ENCODE measurements at regions of chr2 and their contacts with region 1.

Region 1: GRCh38 chr2:240851078-240851991 is 17.3 kb upstream of the AGXT start:
- DNase-seq: peak; percentile 67
- ATAC-seq: peak; percentile 99
- H3K4me3 ChIP-seq: no peak overlapping the region
- H3K27ac ChIP-seq: no peak overlapping the region
- H3K4me1 ChIP-seq: no peaks in the 10 kb centered on the region
- H3K27me3 ChIP-seq: peaks cover 4% of the 10 kb centered on the region; the same call in 1 of the 2 replicates
- CTCF ChIP-seq: peak; percentile 93
- POLR2A ChIP-seq: no peak
- RAD21 ChIP-seq: peak; percentile 96

Region 2: DNA sequence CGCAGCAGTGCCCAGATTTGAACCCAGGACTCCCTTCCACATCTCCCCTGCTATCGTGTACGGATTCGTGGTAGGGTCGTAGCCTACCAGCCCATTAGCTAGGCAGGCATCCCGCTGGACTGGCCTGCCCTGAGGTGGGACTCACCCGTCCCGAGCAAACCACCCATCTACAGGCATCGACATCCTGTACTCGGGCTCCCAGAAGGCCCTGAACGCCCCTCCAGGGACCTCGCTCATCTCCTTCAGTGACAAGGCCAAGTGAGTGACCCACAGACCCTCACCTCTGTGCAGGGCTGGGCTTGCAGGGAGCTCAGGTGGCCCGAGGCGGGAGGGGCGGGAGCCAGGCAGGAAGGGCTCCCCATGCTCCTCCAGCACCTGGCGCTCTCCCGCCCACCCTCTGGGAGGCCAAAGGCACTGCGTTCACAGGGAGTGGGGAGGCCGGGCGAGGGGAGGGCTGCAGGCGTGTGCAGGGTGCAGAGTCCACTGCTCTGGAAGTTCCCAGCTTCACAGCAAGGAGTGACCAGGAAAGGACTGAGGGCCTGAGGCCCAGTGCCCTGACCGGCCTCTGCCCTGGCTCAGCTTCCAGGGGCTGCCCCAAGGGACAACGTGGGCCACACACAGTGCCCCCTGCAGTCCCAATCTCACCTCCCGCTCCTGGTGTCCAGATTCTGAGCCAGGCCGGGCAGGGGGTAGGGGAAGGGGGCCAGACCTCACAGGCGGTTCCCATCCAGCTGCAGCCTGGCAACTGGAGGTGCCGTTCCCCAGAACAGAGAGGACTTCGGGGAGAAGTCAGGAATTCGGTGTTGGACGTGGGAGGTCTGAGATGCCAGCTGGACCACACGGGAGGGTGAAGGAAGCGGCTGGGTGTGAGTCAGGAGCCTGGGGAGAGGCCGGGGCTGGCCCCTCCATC is 22.7 kb after region 1 on chr2:
- CTCF ChIA-PET with region 1: no interaction called
- POLR2A ChIA-PET with region 1: no interaction called
- dilution Hi-C with region 1: no loop called
- in situ Hi-C with region 1: no loop called
- intact Hi-C with region 1: no loop called
- DNase-seq: peak; percentile 8
- ATAC-seq: peak; percentile 38
- H3K4me3 ChIP-seq: no peak overlapping the region
- H3K27ac ChIP-seq: no peak overlapping the region
- H3K4me1 ChIP-seq: no peaks in the 10 kb centered on the region
- H3K27me3 ChIP-seq: peaks cover 28% of the 10 kb centered on the region; the same call in 1 of the 2 replicates
- CTCF ChIP-seq: no peak
- POLR2A ChIP-seq: no peak
- RAD21 ChIP-seq: no peak

Region 3: GRCh38 chr2:240991373-240992263 is 140.3 kb after region 1 on chr2:
- CTCF ChIA-PET with region 1: no interaction called
- POLR2A ChIA-PET with region 1: no interaction called
- dilution Hi-C with region 1: no loop called
- in situ Hi-C with region 1: no loop called
- intact Hi-C with region 1: loop called (anchors 2 kb)
- DNase-seq: peak; percentile 97
- ATAC-seq: peak; percentile 79
- H3K4me3 ChIP-seq: no peak overlapping the region
- H3K27ac ChIP-seq: peak overlapping the region; percentile 35
- H3K4me1 ChIP-seq: peaks cover 32% of the 10 kb centered on the region
- H3K27me3 ChIP-seq: no peaks in the 10 kb centered on the region
- CTCF ChIP-seq: no peak
- POLR2A ChIP-seq: no peak
- RAD21 ChIP-seq: no peak

Region 4: DNA sequence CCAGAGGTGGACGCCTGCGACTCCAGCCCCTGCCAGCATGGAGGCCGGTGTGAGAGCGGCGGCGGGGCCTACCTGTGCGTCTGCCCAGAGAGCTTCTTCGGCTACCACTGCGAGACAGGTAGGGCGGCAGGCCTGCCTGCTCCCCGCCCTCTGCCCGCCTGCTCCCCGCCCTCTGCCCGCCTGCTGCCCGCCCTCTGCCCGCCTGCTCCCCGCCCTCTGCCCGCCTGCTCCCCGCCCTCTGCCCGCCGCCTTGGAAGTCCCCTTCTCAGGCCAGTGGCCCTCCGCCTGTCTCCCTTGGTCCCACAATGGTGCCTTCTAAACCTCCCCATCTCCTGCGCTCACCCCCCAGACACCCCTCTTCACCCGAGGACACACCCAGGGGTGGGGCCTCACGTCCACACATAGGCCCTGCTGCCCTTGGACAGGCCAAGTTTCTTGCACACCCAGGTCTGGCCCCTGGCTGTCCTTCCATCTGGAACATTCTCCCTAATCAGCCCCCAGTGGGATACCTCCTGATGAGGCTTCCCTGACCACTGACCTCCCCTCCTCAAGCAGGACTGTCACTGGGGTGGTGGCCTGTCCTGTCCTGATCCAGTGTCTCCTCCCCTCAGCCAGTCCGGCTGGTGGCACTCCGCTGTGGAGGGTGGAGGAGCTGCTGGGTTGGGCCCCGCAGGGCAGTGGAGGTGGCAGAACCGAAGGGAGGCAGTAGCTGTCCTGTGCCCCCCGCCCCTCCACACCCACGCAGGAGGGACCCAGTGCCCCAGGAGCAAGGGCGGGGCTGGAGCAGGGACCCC is 212.9 kb after region 1 on chr2:
- CTCF ChIA-PET with region 1: no interaction called
- POLR2A ChIA-PET with region 1: no interaction called
- dilution Hi-C with region 1: no loop called
- in situ Hi-C with region 1: no loop called
- intact Hi-C with region 1: loop called (anchors 5 kb)
- DNase-seq: no peak
- ATAC-seq: no peak
- H3K4me3 ChIP-seq: no peak overlapping the region
- H3K27ac ChIP-seq: no peak overlapping the region
- H3K4me1 ChIP-seq: no peaks in the 10 kb centered on the region
- H3K27me3 ChIP-seq: no peaks in the 10 kb centered on the region
- CTCF ChIP-seq: no peak
- POLR2A ChIP-seq: no peak
- RAD21 ChIP-seq: no peak

Region 5: DNA sequence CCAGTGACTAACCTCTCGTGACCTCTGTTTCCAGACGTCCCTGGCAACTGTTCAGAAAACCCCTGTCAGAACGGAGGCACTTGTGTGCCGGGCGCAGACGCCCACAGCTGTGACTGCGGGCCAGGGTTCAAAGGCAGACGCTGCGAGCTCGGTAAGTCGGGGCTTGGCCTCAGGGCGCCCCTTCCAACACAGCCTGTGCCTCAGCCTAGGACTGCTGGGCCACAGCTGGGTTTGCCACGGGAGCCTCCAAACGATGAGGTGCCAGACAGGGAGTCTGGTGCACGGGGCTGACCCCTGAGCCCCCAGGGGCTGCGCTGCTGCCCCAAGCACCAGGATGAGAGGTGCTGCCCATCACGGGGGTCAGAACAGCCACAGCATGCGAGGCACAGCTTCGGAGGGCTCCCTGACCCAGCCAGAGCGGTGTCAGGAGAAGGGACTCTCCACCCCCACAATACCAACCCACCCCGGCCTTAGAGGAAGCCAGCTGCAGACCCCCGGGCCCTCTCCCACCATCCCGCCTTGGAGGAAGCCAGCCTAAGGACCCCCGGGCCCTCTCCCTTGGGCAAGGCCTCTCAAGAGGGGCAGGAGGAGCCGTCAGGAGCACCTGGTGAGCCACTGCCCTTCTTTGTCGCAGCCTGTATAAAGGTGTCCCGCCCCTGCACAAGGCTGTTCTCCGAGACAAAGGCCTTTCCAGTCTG is 230.5 kb after region 1 on chr2:
- CTCF ChIA-PET with region 1: no interaction called
- POLR2A ChIA-PET with region 1: no interaction called
- dilution Hi-C with region 1: no loop called
- in situ Hi-C with region 1: loop called (anchors 10 kb)
- intact Hi-C with region 1: loop called (anchors 1 kb)
- DNase-seq: no peak
- ATAC-seq: no peak
- H3K4me3 ChIP-seq: no peak overlapping the region
- H3K27ac ChIP-seq: no peak overlapping the region
- H3K4me1 ChIP-seq: no peaks in the 10 kb centered on the region
- H3K27me3 ChIP-seq: no peaks in the 10 kb centered on the region
- CTCF ChIP-seq: no peak
- POLR2A ChIP-seq: no peak
- RAD21 ChIP-seq: no peak

Region 6: DNA sequence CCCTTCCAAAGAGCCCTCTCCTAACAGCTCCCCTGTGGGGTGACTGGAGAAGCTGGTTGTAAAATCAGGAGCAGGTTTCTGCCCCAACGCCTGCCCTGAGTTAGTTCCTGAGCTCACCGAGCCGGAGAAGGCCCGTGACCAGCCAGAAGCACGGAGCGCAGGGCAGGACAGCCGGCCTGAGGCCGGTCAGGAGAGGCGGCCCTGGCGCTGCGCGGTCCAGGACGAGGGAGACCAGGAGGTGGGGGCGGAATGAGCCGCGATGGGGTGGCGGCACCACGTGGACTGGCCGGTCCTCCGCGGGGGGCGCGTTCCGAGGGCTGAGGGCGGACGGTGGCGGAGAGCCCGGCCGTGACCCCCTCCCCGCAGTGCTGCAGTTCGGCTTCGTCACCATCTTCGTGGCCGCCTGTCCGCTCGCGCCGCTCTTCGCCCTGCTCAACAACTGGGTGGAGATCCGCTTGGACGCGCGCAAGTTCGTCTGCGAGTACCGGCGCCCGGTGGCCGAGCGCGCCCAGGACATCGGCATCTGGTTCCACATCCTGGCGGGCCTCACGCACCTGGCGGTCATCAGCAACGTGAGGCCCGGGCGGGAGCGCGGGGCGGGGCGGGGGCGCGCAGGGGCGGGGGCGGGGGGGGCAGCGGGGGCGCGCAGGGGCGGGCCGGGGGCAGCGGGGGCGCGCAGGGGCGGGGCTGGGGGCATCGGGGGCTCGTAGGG is 366.1 kb after region 1 on chr2:
- CTCF ChIA-PET with region 1: interaction called, 4 read pairs
- POLR2A ChIA-PET with region 1: no interaction called
- dilution Hi-C with region 1: no loop called
- in situ Hi-C with region 1: loop called (anchors 5 kb)
- intact Hi-C with region 1: loop called (anchors 5 kb)
- DNase-seq: peak; percentile 72
- ATAC-seq: peak; percentile 82
- H3K4me3 ChIP-seq: peak overlapping the region; percentile 49
- H3K27ac ChIP-seq: peak overlapping the region; percentile 26
- H3K4me1 ChIP-seq: peaks cover 4% of the 10 kb centered on the region; the same call in 1 of the 2 replicates
- H3K27me3 ChIP-seq: peaks cover 10% of the 10 kb centered on the region; the same call in 1 of the 2 replicates
- CTCF ChIP-seq: no peak
- POLR2A ChIP-seq: 0 out of 2 replicates have a peak, but pooled peaks have one; percentile 18
- RAD21 ChIP-seq: no peak

Region 7: GRCh38 chr2:241514986-241515737 is 663.8 kb after region 1 on chr2:
- CTCF ChIA-PET with region 1: no interaction called
- POLR2A ChIA-PET with region 1: no interaction called
- dilution Hi-C with region 1: no loop called
- in situ Hi-C with region 1: no loop called
- intact Hi-C with region 1: no loop called
- DNase-seq: no peak
- ATAC-seq: peak; percentile 48; the same call in 1 of the 2 replicates
- H3K4me3 ChIP-seq: no peak overlapping the region
- H3K27ac ChIP-seq: no peak overlapping the region
- H3K4me1 ChIP-seq: no peaks in the 10 kb centered on the region
- H3K27me3 ChIP-seq: no peaks in the 10 kb centered on the region; the same call in 1 of the 2 replicates
- CTCF ChIP-seq: no peak
- POLR2A ChIP-seq: no peak
- RAD21 ChIP-seq: no peak

Region 8: DNA sequence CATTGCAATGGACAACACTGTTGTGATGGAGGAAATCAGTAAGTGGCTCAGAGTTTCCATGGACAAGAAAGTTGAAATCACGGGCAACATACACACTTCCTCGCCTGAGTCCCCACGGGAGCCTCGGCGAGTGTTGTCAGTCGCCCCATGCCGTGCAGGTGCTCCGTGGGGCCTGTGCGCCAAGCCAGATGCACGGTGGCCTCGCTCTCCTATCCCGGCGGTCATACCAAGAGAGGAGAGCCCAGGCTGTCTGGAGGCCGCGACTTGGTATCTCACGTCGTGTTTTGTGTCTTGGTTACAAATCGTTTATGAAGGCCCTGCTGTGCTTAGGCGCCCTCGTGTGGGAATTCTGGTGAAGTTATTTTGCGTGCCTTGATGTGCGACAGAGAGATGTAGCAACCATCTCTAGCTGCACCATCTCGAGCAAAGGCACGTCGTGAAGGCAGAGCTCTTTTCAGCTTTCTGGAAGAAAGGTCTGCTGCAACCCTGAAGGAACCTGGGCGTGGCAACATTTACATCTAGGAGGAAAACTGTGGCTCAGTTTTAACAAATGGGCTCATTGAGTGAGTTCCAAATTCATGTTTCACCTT is 807.9 kb after region 1 on chr2:
- CTCF ChIA-PET with region 1: no interaction called
- POLR2A ChIA-PET with region 1: no interaction called
- dilution Hi-C with region 1: no loop called
- in situ Hi-C with region 1: loop called (anchors 25 kb)
- intact Hi-C with region 1: no loop called
- DNase-seq: peak; percentile 73
- ATAC-seq: peak; percentile 89
- H3K4me3 ChIP-seq: no peak overlapping the region
- H3K27ac ChIP-seq: no peak overlapping the region
- H3K4me1 ChIP-seq: no peaks in the 10 kb centered on the region
- H3K27me3 ChIP-seq: no peaks in the 10 kb centered on the region
- CTCF ChIP-seq: peak; percentile 77
- POLR2A ChIP-seq: no peak
- RAD21 ChIP-seq: peak; percentile 88